ENCODE measurements at regions of chr2 and their contacts with region 1.

Region 1: DNA sequence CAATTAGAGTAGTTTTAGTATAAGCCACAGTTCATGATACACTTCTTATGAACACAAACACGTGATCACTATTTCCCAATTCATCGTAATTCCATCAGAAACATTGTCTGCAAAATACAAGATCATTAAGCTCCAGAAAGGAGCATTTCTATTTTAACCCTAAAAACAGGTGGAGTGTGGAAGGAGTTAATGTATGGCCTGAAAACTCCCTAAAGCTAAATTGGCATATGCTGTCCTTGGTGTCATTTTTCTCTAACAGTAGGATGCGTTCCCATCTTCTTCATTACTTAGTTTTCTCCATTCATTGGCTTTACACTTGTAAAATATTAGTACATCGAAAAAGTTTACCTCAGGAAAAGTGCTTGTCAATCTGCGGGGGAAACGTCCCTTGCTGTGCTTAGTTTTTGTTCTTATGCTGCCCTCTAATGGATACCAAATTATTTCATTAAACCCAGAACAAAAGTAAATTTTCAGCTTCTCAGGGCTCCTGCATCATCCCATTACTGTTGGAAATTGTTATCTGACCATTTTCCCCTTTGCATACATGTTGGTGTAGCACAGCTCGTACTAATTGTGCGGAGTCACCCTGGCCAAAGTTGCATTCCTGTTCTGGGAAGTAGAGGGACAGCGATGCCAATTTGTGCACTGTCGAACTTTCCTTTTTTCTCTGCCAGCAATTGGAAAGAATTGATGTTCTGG is 153.4 kb downstream of the GPD2 start:
- DNase-seq: peak; percentile 50 to 75 (median 71)
- H3K4me3 ChIP-seq: no peak overlapping the region
- H3K27ac ChIP-seq: no peak overlapping the region
- H3K4me1 ChIP-seq: peaks cover 0 to 2% (median 0%) of the 10 kb centered on the region in 4 experiments
- H3K27me3 ChIP-seq: peaks cover 0 to 2% (median 0%) of the 10 kb centered on the region in 5 experiments

Region 2: GRCh38 chr2:155377266-155377680 is 1212.3 kb before region 1 on chr2:
- CTCF ChIA-PET with region 1: interaction called, 18 read pairs
- POLR2A ChIA-PET with region 1: no interaction called
- DNase-seq: peak; percentile 32 to 65 (median 59)
- H3K4me3 ChIP-seq: no peak overlapping the region
- H3K27ac ChIP-seq: peak overlapping the region in 1 of 2 experiments; percentile 31
- H3K4me1 ChIP-seq: peaks cover 0 to 21% (median 4%) of the 10 kb centered on the region in 4 experiments
- H3K27me3 ChIP-seq: no peaks in the 10 kb centered on the region

Region 3: DNA sequence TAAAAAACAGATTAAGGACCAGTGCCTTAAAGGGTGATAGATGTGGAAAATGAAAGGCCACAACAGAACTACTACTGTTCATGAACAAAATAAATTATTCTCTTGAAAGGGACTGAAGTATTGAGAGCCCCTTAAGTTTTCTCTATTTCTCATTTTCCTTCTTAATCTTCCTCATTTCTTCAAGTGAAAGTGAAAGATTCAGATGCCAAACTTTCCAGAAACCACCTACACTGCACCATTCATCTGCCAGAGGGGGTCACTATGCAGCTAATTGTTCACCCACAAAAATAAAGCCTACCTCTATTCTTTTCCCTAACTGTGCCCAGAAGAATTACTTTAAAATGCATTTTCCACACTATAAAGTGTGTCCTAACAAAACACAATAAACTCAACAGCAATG is 397.1 kb before region 1 on chr2:
- CTCF ChIA-PET with region 1: interaction called, 11 read pairs
- POLR2A ChIA-PET with region 1: no interaction called
- DNase-seq: peak; percentile 14 to 49 (median 45)
- H3K4me3 ChIP-seq: no peak overlapping the region
- H3K27ac ChIP-seq: no peak overlapping the region
- H3K4me1 ChIP-seq: no peaks in the 10 kb centered on the region
- H3K27me3 ChIP-seq: no peaks in the 10 kb centered on the region

Region 4: GRCh38 chr2:156334496-156335478 is 254.7 kb before region 1 on chr2:
- CTCF ChIA-PET with region 1: interaction called, 26 read pairs
- POLR2A ChIA-PET with region 1: interaction called, 3 read pairs
- DNase-seq: peak; percentile 57 to 93 (median 67)
- H3K4me3 ChIP-seq: peak overlapping the region; percentile 48 to 80 (median 71)
- H3K27ac ChIP-seq: peak overlapping the region; percentile 33 to 87
- H3K4me1 ChIP-seq: peaks cover 17 to 45% (median 41%) of the 10 kb centered on the region in 4 experiments
- H3K27me3 ChIP-seq: peaks cover 9 to 27% (median 18%) of the 10 kb centered on the region in 5 experiments

Region 5: GRCh38 chr2:156745619-156746018 is 156.1 kb after region 1 on chr2:
- CTCF ChIA-PET with region 1: no interaction called
- POLR2A ChIA-PET with region 1: no interaction called
- DNase-seq: no peak
- H3K4me3 ChIP-seq: no peak overlapping the region
- H3K27ac ChIP-seq: no peak overlapping the region
- H3K4me1 ChIP-seq: no peaks in the 10 kb centered on the region
- H3K27me3 ChIP-seq: peaks cover 0 to 2% (median 0%) of the 10 kb centered on the region in 5 experiments